Caco-2 (cell line): ENCODE measurements at regions of chr6 and their contacts with region 1.

Region 1: GRCh38 chr6:162709431-162709830 is 18.1 kb downstream of the PRKN start:
- DNase-seq: no peak
- H3K4me3 ChIP-seq: no peak overlapping the region
- H3K4me3 Mint-ChIP-seq: no peak overlapping the region
- H3K27ac Mint-ChIP-seq: no peak overlapping the region
- H3K4me1 ChIP-seq: no peaks in the 10 kb centered on the region
- H3K4me1 Mint-ChIP-seq: no peaks in the 10 kb centered on the region
- H3K27me3 ChIP-seq: no peaks in the 10 kb centered on the region
- H3K27me3 Mint-ChIP-seq: no peaks in the 10 kb centered on the region
- CTCF ChIP-seq: no peak

Region 2: GRCh38 chr6:162653808-162654207 is 55.6 kb before region 1 on chr6:
- CTCF ChIA-PET with region 1: interaction called, 11 read pairs
- POLR2A ChIA-PET with region 1: no interaction called
- intact Hi-C with region 1: no loop called
- DNase-seq: no peak
- H3K4me3 ChIP-seq: no peak overlapping the region
- H3K4me3 Mint-ChIP-seq: no peak overlapping the region
- H3K27ac Mint-ChIP-seq: no peak overlapping the region
- H3K4me1 ChIP-seq: no peaks in the 10 kb centered on the region
- H3K4me1 Mint-ChIP-seq: no peaks in the 10 kb centered on the region
- H3K27me3 ChIP-seq: no peaks in the 10 kb centered on the region
- H3K27me3 Mint-ChIP-seq: peaks cover 3% of the 10 kb centered on the region
- CTCF ChIP-seq: no peak